Activated CD4-positive, alpha-beta T cell treated with anti-CD3 and anti-CD28 coated beads, Interleukin-2, amount 10 ng/mL, durations not matched to agents 24 days and 14 days (primary cell): ENCODE measurements at regions of chrX and their contacts with region 1.

Region 1: GRCh38 chrX:72714476-72714916 is 390 bp upstream of the PHKA1 start:
- DNase-seq: peak; percentile 53
- H3K4me3 Mint-ChIP-seq: peak overlapping the region; percentile 80
- H3K27ac Mint-ChIP-seq: peak overlapping the region; percentile 80
- H3K4me1 Mint-ChIP-seq: peaks cover 11% of the 10 kb centered on the region
- H3K27me3 Mint-ChIP-seq: peaks cover 5% of the 10 kb centered on the region

Region 2: GRCh38 chrX:72572248-72573157 is 142.0 kb before region 1 on chrX and contains the start of gene HDAC8:
- intact Hi-C with region 1: loop called (anchors 2 kb)
- DNase-seq: peak; percentile 85
- H3K4me3 Mint-ChIP-seq: peak within 1 kb of the TSS; percentile 92
- H3K27ac Mint-ChIP-seq: peak within 1 kb of the TSS; percentile 96
- H3K4me1 Mint-ChIP-seq: peaks cover 5% of the 10 kb centered on the region
- H3K27me3 Mint-ChIP-seq: peaks cover 9% of the 10 kb centered on the region
- total RNA-seq, gene HDAC8: 29.2 and 29.9 TPM in 2 replicates